ENCODE measurements at regions of chr18 and their contacts with region 1.

Region 1: DNA sequence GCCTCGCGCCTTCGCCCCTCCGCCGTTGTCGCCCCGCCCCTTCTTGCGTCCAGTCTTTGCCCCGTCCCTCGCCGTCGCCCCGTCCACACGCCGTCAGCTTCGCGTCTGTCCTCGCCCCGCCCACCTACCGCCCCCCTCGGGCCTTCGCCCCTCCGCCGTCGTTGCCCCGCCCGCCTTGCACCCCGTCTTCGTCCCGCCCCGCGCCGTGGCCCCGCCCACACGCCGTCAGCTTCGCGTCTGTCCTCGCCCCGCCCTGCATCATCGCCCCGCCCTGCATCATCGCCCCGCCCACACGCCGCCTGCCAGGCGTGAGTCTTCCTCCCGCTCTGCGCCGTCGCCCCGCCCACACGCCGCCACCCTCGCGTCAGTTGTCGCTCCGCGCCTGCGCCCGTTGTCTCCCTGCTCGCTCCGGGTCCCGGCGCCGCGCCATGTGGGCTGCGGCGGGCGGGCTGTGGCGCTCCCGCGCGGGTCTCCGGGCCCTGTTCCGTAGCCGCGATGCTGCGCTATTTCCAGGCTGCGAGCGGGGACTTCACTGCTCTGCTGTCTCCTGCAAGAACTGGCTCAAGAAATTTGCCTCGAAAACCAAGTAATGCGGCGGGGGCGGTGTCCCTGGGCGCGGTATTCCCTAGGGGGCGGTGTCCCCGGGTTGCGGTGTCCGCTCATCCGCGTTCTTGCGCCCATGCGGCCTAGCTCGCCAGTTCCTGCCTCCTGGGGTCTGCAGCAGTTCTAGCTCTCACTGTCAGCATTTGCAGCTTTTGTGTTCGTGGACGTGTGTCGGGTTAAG is at the start of gene RBFA:
- DNase-seq: peak; percentile 100
- ATAC-seq: peak; percentile 87
- H3K4me3 Mint-ChIP-seq: peak within 1 kb of the TSS; percentile 94
- H3K27ac Mint-ChIP-seq: peak within 1 kb of the TSS; percentile 89
- H3K4me1 Mint-ChIP-seq: peaks cover 21% of the 10 kb centered on the region
- H3K27me3 Mint-ChIP-seq: no peaks in the 10 kb centered on the region
- total RNA-seq, gene RBFA: 32.2 to 39.1 TPM

Region 2: DNA sequence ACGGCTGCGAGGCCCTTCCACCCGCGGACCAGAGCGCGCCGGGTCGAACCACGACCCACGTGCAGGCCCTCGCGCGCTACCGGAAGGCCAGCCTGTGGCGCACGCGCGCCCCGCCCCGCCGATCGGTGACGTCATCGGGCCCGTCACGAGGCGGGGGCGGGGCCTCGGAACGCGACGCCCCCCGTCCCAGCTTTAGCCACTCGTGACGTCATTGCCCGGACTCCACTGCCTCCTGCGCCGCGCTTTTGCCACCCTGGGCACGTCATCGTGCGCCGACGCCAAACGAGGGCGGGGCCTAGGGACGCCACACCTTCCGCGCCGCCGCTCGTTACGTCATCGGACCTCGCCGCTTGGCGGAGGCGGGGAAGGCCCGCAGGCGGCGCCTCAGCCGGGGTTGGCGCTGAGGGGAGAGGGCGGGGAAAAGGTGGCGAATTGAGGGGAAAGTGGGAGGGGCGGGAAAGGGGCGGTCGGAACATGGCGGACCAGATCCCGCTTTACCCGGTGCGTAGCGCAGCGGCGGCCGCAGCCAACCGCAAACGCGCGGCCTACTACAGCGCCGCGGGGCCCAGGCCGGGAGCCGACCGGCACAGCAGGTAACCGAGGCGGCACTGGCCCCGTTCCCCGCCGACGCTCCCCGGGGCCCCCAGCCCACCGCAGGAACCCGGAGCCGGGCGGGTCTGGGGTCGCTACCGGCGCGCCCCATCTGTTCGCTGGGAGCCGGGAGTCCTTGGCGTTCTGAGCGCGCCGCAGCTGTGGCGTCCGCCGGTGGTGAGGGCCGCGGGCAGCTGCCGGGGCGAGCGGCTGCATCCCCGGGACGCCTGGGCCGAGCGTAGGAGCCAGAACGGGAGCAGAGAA is 965.1 kb before region 1 on chr18 and contains the start of gene ATP9B:
- CTCF ChIA-PET with region 1: interaction called, 4 read pairs
- POLR2A ChIA-PET with region 1: no interaction called
- intact Hi-C with region 1: loop called (anchors 1 to 5 kb)
- DNase-seq: peak; percentile 99
- ATAC-seq: peak; percentile 83
- H3K4me3 Mint-ChIP-seq: peak within 1 kb of the TSS; percentile 87
- H3K27ac Mint-ChIP-seq: peak within 1 kb of the TSS; percentile 99
- H3K4me1 Mint-ChIP-seq: peaks cover 38% of the 10 kb centered on the region
- H3K27me3 Mint-ChIP-seq: peaks cover 11% of the 10 kb centered on the region
- total RNA-seq, gene ATP9B: 19.4 to 20.8 TPM

Region 3: DNA sequence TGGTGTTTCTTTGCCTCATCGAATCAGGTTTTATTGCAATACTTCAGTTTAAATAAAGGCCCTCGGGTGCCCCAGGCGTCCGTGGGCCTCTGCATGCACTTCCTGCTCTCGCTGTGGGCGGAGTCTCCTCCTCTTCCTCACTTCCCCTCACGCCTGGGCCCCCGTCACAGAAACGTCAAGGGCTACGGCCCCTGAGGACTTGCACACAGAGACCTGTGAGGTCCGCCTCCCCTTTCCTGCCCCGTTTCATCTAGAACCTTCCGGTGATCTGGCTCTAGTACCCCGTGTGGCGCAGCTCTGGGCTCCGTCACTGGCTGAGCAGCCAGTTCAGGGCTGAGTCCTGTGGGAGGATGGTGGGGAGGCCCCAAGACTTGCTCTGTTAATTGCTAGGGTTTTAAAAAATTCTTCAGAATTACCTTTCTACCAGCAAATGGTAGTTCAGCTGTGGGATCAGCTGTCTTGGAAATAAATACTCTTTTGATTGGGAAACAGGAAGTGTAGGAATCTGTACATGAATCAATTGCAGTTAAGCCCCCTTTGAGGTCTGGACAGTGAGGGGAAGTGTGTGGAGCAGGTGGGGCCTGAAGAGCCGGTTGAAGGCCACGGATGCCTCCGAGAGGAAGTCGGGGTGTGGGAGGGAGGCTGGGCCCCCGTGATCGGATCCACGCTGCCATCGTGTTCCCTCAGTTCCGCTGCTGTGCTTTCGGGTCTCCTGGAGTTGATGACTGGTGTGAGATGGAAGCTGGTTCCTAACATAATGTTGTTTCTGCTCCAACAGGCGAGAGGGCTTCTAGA is 628.3 kb before region 1 on chr18:
- CTCF ChIA-PET with region 1: no interaction called
- POLR2A ChIA-PET with region 1: no interaction called
- intact Hi-C with region 1: loop called in 1 of 2 experiments (anchors 2 kb)
- DNase-seq: peak; percentile 94
- ATAC-seq: peak; percentile 86
- H3K4me3 Mint-ChIP-seq: peak overlapping the region; percentile 83
- H3K27ac Mint-ChIP-seq: peak overlapping the region; percentile 96
- H3K4me1 Mint-ChIP-seq: peaks cover 65% of the 10 kb centered on the region
- H3K27me3 Mint-ChIP-seq: no peaks in the 10 kb centered on the region

Region 4: DNA sequence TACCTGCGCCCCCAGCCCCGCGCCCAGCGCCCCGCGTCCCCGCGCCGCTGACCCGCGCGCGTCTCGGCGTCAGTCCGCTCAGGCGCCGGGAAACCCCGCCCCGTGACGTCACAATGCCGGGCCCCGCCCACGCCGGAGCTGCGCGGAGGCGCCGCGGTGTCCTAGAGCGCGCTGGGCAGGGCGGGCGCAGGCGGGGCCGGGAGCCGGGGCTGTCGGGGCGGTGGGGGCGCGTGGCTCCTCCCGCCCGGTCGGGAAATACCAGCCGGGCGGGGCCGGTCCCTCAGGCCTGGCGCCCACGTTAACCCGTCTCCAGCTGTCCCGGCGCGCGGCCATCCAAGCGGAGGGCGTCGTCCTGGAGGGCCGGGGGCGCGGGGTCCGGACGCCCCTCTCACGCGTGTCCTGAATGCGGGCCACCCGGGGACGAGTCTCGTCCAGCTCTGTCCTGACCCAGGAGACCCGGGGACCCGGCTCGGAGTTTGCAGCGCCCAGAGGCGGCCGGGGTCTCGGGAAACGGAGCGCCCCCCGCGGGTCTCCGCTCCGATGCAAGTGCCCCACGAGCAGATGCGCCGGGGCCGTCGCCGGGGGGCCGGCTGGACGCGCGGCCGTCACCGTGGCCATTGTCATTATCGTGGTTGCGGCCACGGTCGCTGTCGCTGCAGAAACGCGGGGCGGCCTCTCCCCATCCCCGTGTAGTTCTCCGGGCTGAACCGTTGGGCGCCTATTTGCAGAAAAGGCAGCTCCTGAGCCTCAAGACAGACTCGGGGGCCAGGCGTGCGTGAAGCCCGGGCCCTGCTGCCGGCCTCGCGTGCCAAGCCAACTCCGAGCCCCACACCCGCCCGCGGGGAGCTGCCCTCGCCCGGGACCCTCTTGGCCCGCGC is 82.4 kb before region 1 on chr18 and contains the start of gene SLC66A2:
- CTCF ChIA-PET with region 1: interaction called, 5 read pairs
- POLR2A ChIA-PET with region 1: no interaction called
- intact Hi-C with region 1: loop called (anchors 1 kb)
- DNase-seq: peak; percentile 97
- ATAC-seq: peak; percentile 87
- H3K4me3 Mint-ChIP-seq: peak within 1 kb of the TSS; percentile 82
- H3K27ac Mint-ChIP-seq: peak within 1 kb of the TSS; percentile 81
- H3K4me1 Mint-ChIP-seq: peaks cover 39% of the 10 kb centered on the region
- H3K27me3 Mint-ChIP-seq: no peaks in the 10 kb centered on the region
- total RNA-seq, gene SLC66A2: 23.4 to 28.5 TPM

Region 5: DNA sequence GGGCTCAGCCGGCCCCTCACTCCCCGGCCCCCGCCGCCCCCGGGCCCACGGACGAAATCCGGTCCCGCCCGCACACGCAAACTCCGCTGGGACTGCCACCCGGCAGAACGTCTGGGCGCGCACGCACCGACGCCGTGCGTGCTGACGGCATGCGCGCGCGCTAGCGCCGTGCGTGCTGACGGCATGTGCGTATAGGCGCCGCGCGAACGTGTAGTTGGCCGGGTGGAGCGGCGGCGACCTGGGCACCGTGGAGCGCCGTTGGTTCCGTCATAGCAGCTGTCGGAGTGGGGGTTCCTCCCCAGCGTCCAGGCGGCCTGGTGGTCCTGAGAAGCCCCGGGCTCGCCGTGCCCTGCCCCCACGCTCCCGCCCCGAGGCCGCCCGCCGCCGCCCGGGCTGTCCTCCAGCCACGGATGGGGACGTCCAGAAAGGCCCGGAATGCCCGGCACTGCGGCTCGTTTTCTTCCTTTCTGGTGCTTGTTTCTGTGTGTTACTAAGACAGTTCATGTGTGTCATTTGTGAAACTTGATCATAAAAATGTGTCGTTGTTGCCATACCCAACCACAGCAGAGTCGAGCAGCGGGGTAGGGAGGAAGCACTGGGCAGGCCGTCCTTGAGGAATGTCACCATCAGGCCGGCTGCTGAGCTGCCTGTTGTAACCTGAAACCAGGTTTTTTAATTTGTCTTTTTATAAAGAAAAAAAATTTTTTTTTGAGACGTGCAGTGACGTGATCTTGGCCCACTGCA is 45.6 kb before region 1 on chr18 and contains the start of gene TXNL4A:
- CTCF ChIA-PET with region 1: interaction called, 5 read pairs
- POLR2A ChIA-PET with region 1: interaction called, 3 read pairs
- intact Hi-C with region 1: loop called (anchors 1 kb)
- DNase-seq: peak; percentile 92
- ATAC-seq: peak; percentile 98
- H3K4me3 Mint-ChIP-seq: peak within 1 kb of the TSS; percentile 92
- H3K27ac Mint-ChIP-seq: peak within 1 kb of the TSS; percentile 98
- H3K4me1 Mint-ChIP-seq: peaks cover 31% of the 10 kb centered on the region
- H3K27me3 Mint-ChIP-seq: no peaks in the 10 kb centered on the region
- total RNA-seq, gene TXNL4A: 150 to 194 TPM

Region 6: GRCh38 chr18:80086281-80086680 is 52.0 kb after region 1 on chr18:
- CTCF ChIA-PET with region 1: no interaction called
- POLR2A ChIA-PET with region 1: no interaction called
- intact Hi-C with region 1: no loop called
- DNase-seq: no peak
- ATAC-seq: no peak
- H3K4me3 Mint-ChIP-seq: no peak overlapping the region
- H3K27ac Mint-ChIP-seq: no peak overlapping the region
- H3K4me1 Mint-ChIP-seq: no peaks in the 10 kb centered on the region
- H3K27me3 Mint-ChIP-seq: peaks cover 6% of the 10 kb centered on the region

Region 7: DNA sequence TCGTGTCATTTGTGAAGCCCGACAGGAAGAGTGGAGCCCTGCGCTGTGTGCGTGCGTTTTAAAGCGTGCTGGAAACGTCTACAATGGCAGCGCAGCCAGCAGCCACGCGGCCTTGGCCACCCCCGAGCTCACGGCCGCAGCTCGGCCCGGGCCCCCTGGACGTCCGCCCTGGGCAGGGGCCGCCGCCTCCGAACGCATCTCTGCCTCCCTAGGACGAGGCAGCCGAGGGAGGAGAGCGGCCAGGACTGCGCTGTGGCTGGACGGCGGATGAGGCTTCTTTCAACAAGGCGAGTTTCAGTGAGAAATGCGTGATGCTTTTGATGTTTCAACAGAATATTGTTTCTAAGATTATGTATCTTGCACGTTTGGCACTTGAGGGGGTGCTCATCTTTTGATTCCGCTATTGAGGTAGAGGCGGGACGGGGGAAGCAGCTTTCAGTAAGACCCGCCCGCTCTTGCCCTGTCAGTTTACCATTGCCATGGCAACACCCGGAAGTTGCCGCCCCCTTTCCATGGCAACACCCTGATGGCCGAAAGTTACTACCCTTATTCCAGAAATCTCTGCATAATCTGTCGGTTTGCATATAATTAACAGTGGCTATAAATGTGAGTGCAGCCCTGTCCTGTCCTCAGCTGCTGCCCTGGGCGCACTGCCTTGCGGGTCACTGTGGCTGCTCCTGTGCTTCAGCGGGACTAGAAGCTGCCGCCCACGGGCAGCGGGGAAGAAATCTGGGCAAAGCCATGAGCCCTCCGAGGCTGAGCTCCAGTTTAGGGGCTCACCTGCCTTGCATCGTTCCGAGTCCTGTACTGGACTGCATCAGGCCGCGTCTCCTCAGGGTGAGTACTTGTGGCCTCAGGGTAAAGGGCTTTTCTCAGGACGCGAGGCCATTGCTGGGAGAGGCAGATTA is 113.4 kb after region 1 on chr18:
- CTCF ChIA-PET with region 1: no interaction called
- POLR2A ChIA-PET with region 1: no interaction called
- intact Hi-C with region 1: loop called in 1 of 2 experiments (anchors 1 kb)
- DNase-seq: peak; percentile 86
- ATAC-seq: peak; percentile 87
- H3K4me3 Mint-ChIP-seq: peak overlapping the region; percentile 74
- H3K27ac Mint-ChIP-seq: no peak overlapping the region
- H3K4me1 Mint-ChIP-seq: peaks cover 15% of the 10 kb centered on the region
- H3K27me3 Mint-ChIP-seq: peaks cover 9% of the 10 kb centered on the region